IMR-90 (cell line): ENCODE measurements at regions of chr10 and their contacts with region 1.

Region 1: DNA sequence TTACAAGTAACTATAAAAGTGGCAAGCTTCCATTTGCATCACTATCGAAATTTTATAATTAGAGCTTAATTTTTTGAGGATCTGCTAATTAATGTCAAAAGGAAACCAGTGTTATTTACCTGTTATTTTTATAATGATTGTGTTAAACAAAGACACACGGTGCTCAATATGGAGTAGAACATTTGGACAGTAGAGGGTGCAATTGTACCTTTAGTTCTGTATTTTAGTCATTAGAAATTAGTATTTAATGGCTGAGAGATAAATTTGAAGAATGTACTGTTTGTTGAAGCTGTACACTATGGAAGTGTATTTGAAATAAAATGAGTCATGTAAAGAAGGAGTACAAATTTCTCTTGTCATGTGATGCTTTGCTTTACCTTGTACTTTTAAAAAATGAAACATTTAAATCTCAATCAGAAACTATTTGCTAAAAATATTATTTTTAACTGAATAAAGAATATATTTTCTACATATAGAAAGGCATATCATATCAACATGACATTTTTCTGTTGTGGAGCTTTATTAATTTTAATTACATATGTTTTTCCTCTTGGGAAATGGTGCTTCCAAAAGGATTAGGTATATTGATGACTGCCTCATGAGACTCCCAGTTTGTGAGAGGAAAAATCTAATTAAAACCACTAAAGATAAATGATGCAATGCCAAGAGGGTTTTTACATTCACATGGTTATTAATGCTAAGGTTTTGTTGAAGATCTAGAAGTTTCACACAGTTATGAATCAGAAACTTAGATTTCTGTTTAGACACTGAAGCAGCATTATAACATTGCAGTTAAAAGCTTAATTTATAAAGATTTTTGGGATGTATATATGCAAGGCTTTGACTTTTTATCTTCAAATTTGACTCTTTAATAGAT is 10.4 kb upstream of the PRKG1 start:
- DNase-seq: peak; percentile 77
- ATAC-seq: peak; percentile 96
- H3K4me3 ChIP-seq: no peak overlapping the region
- H3K27ac ChIP-seq: no peak overlapping the region
- H3K4me1 ChIP-seq: no peaks in the 10 kb centered on the region
- H3K27me3 ChIP-seq: no peaks in the 10 kb centered on the region
- CTCF ChIP-seq: peak; percentile 85
- POLR2A ChIP-seq: 0 out of 2 replicates have a peak, but pooled peaks have one; percentile 32
- RAD21 ChIP-seq: peak; percentile 82

Region 2: DNA sequence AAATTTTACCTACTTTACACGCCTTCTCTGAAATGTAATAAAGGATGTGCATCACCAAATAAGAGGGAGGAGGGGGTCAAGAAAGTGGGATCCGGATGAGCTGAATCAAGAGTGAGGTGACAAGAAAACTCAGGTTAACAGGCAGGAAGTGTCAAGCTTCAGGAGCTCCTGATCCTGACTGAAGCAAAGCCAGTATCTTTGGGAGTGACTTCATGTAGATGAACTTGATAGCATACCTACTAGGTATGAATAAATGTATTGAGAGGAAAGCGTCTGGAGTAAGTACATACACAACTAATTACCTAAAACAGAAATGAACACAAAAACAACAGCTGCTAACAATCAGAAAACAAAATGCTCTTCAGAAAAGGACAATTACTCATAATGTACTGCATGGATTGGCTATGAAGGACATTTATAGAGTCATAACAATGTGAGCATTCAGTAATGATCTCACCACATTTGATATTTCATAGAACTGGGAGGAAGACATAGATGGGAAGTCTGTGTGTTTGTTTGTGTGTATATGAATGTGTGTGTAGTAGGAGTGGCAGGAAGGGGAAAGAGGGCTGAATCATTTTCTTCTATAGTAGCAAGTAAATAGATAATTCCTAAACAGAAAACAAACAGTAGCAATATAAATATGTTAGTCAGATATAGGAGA is 39.8 kb after region 1 on chr10:
- CTCF ChIA-PET with region 1: no interaction called
- POLR2A ChIA-PET with region 1: no interaction called
- dilution Hi-C with region 1: no loop called
- in situ Hi-C with region 1: no loop called
- intact Hi-C with region 1: no loop called
- DNase-seq: peak; percentile 42
- ATAC-seq: peak; percentile 48
- H3K4me3 ChIP-seq: no peak overlapping the region
- H3K27ac ChIP-seq: no peak overlapping the region
- H3K4me1 ChIP-seq: peaks cover 9% of the 10 kb centered on the region; the same call in 1 of the 2 replicates
- H3K27me3 ChIP-seq: no peaks in the 10 kb centered on the region
- CTCF ChIP-seq: no peak
- POLR2A ChIP-seq: no peak
- RAD21 ChIP-seq: no peak

Region 3: DNA sequence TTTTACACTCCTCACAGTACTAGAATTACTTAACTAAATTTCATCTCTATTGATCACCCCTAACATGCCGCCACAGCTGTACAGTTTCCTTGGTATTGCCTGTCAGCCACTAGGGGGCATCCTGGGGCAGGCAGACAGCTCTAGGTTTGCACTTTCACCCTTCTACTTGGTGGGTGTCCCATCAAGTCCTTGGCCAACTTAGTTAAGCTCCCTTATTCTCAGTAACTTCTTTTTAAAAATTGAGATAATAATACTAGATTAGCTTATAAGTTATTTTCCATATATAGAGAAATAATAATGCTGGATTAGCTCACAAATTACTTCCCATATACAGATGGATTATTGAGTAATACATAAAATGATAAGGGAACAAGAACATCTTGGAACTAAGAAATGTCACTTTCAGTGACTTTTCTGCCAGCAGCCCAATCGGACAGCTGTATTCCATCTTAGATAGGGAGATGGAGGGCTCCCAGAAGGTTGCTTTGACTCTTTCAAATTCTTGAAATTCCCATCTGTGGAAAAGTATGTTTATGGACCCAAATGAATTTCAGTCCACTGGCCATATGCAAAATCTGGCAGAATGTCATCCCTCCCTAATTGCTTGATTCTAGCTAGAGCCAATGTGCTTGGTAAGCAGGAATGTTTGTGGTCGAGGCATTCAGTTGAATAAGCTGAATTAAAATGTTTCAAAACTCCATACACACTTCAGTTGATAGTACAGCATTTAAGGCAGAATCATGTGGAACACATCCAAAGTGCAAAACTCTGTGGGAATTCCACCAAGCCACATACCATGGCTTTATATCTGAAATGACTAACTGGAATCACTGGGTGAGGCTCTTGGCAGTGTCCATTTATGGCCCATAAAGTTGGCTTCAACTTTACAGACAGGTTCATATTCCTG is 325.8 kb after region 1 on chr10:
- CTCF ChIA-PET with region 1: interaction called, 10 read pairs
- POLR2A ChIA-PET with region 1: no interaction called
- dilution Hi-C with region 1: no loop called
- in situ Hi-C with region 1: no loop called
- intact Hi-C with region 1: loop called (anchors 5 kb)
- DNase-seq: peak; percentile 99
- ATAC-seq: peak; percentile 90
- H3K4me3 ChIP-seq: no peak overlapping the region
- H3K27ac ChIP-seq: peak overlapping the region; percentile 87; the same call in 1 of the 2 replicates
- H3K4me1 ChIP-seq: peaks cover 4% of the 10 kb centered on the region
- H3K27me3 ChIP-seq: no peaks in the 10 kb centered on the region
- CTCF ChIP-seq: peak; percentile 60
- POLR2A ChIP-seq: no peak
- RAD21 ChIP-seq: peak; percentile 63

Region 4: DNA sequence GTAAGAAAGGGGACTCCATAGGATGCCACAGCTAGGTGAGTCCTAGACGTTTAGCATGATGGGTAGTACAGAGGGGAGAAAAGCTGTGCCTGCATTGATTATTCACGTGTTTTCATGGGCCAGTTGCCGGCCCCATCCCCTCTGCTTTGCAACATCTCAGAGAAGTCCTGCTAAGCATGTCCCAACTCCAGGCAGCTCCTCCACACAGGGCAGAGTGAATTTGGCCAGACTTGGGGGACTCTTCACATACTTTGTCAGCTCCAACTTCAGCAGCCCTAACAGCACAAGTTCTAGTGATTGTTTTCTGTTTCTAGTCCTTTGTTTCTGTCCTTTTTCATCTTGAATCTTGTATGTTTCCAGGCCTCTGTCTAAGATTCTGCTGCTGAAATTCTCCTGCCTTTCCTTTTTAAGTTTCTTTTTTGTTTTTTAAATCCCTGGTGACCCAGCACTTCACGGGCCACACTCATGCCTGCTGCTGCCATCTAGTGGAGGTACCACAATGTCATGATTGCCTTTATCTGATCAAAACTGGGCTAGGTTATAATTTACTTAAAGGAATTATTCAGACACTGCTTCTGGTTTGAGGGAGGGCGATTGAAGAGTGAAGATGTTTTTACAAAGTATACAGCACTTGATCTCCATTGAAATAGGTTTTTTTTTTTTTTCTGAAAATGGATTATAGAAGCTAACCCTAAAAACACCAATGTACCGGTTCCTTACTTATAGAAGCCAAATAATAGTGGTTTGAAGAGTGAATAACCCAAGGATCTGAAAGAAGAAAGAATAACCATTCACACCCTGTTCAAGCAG is 358.6 kb after region 1 on chr10:
- CTCF ChIA-PET with region 1: interaction called, 4 read pairs
- POLR2A ChIA-PET with region 1: no interaction called
- dilution Hi-C with region 1: no loop called
- in situ Hi-C with region 1: no loop called
- intact Hi-C with region 1: loop called (anchors 2 kb)
- DNase-seq: peak; percentile 76
- ATAC-seq: peak; percentile 88
- H3K4me3 ChIP-seq: no peak overlapping the region
- H3K27ac ChIP-seq: peak overlapping the region; percentile 33; the same call in 1 of the 2 replicates
- H3K4me1 ChIP-seq: peaks cover 6% of the 10 kb centered on the region
- H3K27me3 ChIP-seq: no peaks in the 10 kb centered on the region
- CTCF ChIP-seq: peak; percentile 85
- POLR2A ChIP-seq: no peak
- RAD21 ChIP-seq: peak; percentile 88

Region 5: DNA sequence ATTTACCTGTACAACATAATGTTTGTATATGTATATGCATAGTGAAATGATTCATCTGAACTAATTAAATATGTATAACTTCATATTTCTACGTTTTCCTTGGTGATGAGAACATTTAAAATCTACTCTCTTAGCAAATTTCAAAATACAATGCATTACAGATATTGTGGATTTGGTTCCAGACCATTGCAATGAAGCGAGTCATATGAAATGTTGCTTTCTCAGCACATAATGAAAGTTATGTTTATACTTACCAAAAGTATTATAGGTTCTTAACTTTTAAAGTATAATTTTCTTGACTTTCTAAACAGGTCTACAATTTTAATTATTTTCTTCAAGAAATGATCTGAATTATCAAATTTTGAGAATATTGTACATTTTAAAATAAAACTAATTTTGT is 446.3 kb after region 1 on chr10:
- CTCF ChIA-PET with region 1: no interaction called
- POLR2A ChIA-PET with region 1: no interaction called
- dilution Hi-C with region 1: no loop called
- in situ Hi-C with region 1: no loop called
- intact Hi-C with region 1: no loop called
- DNase-seq: peak; percentile 53
- ATAC-seq: peak; percentile 48; the same call in 1 of the 2 replicates
- H3K4me3 ChIP-seq: no peak overlapping the region
- H3K27ac ChIP-seq: no peak overlapping the region
- H3K4me1 ChIP-seq: no peaks in the 10 kb centered on the region
- H3K27me3 ChIP-seq: no peaks in the 10 kb centered on the region
- CTCF ChIP-seq: no peak
- POLR2A ChIP-seq: no peak
- RAD21 ChIP-seq: no peak

Region 6: DNA sequence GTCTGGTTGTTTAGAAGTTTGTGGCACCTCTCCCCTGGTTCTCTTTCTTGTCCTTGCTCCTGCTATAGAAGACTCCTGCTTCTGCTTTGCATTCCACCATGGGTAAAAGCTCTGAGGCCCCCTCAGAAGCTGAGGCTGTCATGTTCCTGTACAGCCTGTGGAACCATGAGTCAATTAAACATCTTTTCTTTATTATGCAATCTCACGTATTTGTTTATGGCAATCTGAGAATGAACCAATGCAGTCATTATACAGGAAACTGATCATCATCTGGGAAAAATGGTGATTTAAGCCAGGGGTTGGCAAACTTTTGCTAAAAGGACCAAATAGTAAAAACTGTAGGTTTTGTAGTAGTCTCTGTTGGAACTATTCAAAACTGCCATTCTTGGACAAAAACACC is 460.1 kb after region 1 on chr10:
- CTCF ChIA-PET with region 1: no interaction called
- POLR2A ChIA-PET with region 1: no interaction called
- dilution Hi-C with region 1: no loop called
- in situ Hi-C with region 1: no loop called
- intact Hi-C with region 1: loop called (anchors 10 kb)
- DNase-seq: peak; percentile 79
- ATAC-seq: peak; percentile 82
- H3K4me3 ChIP-seq: no peak overlapping the region
- H3K27ac ChIP-seq: no peak overlapping the region
- H3K4me1 ChIP-seq: peaks cover 6% of the 10 kb centered on the region
- H3K27me3 ChIP-seq: no peaks in the 10 kb centered on the region
- CTCF ChIP-seq: no peak
- POLR2A ChIP-seq: no peak
- RAD21 ChIP-seq: no peak

Region 7: GRCh38 chr10:51960494-51960895 is 896.6 kb after region 1 on chr10:
- CTCF ChIA-PET with region 1: interaction called, 4 read pairs
- POLR2A ChIA-PET with region 1: no interaction called
- dilution Hi-C with region 1: no loop called
- in situ Hi-C with region 1: loop called (anchors 10 kb)
- intact Hi-C with region 1: loop called (anchors 2 kb)
- DNase-seq: peak; percentile 76
- ATAC-seq: peak; percentile 66
- H3K4me3 ChIP-seq: no peak overlapping the region
- H3K27ac ChIP-seq: no peak overlapping the region
- H3K4me1 ChIP-seq: no peaks in the 10 kb centered on the region
- H3K27me3 ChIP-seq: no peaks in the 10 kb centered on the region
- CTCF ChIP-seq: peak; percentile 63
- POLR2A ChIP-seq: no peak
- RAD21 ChIP-seq: peak; percentile 73

Region 8: GRCh38 chr10:52004342-52004949 is 940.5 kb after region 1 on chr10:
- CTCF ChIA-PET with region 1: interaction called, 5 read pairs
- POLR2A ChIA-PET with region 1: no interaction called
- dilution Hi-C with region 1: no loop called
- in situ Hi-C with region 1: no loop called
- intact Hi-C with region 1: loop called (anchors 5 kb)
- DNase-seq: peak; percentile 67
- ATAC-seq: peak; percentile 85
- H3K4me3 ChIP-seq: no peak overlapping the region
- H3K27ac ChIP-seq: no peak overlapping the region
- H3K4me1 ChIP-seq: peaks cover 1% of the 10 kb centered on the region; the same call in 1 of the 2 replicates
- H3K27me3 ChIP-seq: no peaks in the 10 kb centered on the region
- CTCF ChIP-seq: peak; percentile 75
- POLR2A ChIP-seq: no peak
- RAD21 ChIP-seq: peak; percentile 78

Region 9: DNA sequence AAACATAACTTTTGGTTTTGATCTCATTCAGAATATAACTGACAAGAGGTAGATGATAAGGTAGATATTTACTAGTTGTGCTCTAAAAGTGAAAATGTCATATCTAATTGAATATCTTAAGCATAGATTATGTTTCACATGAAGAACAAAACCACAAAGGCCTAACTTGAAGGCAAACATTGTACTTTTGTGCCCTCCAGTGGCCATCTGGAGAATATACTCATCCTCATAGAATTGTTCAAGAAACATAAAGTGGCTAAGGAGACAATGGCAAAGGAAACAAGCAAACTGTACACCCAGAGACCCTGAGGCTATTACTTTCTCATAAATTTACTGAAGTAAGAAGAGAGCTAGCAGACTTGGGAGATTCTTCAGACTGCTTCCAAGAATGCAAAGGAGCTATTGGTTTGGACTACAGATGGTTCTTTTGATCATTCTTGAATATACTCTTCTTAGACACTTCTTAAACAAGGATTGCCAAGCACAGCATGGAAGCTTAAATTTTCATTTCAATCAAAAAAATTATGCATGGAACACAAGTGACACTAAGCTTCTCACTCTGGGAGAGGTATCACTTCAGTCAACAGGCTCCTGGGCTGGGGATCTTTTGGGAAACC is 1152.0 kb after region 1 on chr10:
- CTCF ChIA-PET with region 1: no interaction called
- POLR2A ChIA-PET with region 1: no interaction called
- dilution Hi-C with region 1: no loop called
- in situ Hi-C with region 1: loop called (anchors 10 kb)
- intact Hi-C with region 1: loop called (anchors 5 kb)
- DNase-seq: peak; percentile 81
- ATAC-seq: peak; percentile 79
- H3K4me3 ChIP-seq: no peak overlapping the region
- H3K27ac ChIP-seq: no peak overlapping the region
- H3K4me1 ChIP-seq: peaks cover 3% of the 10 kb centered on the region
- H3K27me3 ChIP-seq: no peaks in the 10 kb centered on the region
- CTCF ChIP-seq: peak; percentile 89
- POLR2A ChIP-seq: 0 out of 2 replicates have a peak, but pooled peaks have one; percentile 30
- RAD21 ChIP-seq: peak; percentile 91